ENCODE measurements at regions of chr18 and their contacts with region 1.

Region 1: DNA sequence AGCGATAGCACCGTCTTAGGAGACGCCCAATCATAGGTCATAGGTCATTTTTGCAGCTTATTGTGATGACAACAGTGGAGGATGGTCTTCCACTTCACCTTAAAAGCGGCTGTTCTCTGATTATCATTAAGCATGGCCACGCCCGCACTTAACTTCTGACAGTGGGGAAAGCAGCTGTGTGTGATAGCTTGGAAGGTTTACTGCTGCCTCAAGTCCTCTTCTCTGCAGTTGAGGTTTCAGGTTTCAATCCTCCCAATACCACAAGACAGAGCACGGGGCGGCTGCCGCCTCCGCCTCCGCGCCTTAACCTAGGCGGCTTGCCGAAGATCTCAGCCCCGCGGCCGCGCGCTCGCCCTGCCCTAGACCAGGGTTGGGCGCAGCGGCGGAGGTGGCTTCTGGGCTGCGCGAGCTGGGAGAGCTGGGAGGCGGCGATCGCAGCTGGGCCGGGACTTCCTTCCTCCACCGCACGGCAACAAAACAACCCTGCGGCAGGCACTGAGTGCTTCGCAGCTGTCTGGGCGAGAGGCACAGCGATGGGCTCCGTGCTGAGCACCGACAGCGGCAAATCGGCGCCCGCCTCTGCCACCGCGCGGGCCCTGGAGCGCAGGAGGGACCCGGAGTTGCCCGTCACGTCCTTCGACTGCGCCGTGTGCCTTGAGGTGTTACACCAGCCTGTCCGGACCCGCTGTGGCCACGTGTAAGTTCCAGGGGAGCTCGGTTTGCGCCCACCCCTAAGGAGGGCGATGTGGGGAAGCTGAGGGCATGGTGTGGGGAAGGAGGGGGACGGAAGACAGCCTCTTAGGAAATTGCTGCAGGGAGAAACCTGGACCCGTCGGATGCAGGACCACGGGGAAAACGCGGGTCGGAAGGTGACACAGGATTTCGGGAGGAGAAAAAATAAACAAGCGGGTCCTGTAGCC is at the start of gene RNF125:
- DNase-seq: peak; percentile 79 to 97 (median 92)
- ATAC-seq: peak; percentile 70 to 77
- H3K4me3 Mint-ChIP-seq: peak within 1 kb of the TSS; percentile 78 to 100 (median 94)
- H3K27ac Mint-ChIP-seq: peak within 1 kb of the TSS; percentile 88 to 100 (median 97)
- H3K4me1 Mint-ChIP-seq: peaks cover 24 to 76% (median 56%) of the 10 kb centered on the region in 4 donors
- H3K27me3 Mint-ChIP-seq: no peaks in the 10 kb centered on the region
- polyA plus RNA-seq, gene RNF125: 49.1 to 62.1 (median 60.9) TPM

Region 2: GRCh38 chr18:31942999-31943865 is 75.4 kb before region 1 on chr18 and contains the start of gene TRAPPC8:
- POLR2A ChIA-PET with region 1: interaction called, 123 read pairs
- DNase-seq: peak; percentile 81 to 97 (median 92)
- ATAC-seq: peak; percentile 88
- H3K4me3 Mint-ChIP-seq: peak within 1 kb of the TSS; percentile 93 to 100 (median 98)
- H3K27ac Mint-ChIP-seq: peak within 1 kb of the TSS; percentile 96 to 100 (median 100)
- H3K4me1 Mint-ChIP-seq: peaks cover 28 to 54% (median 46%) of the 10 kb centered on the region in 4 donors
- H3K27me3 Mint-ChIP-seq: no peaks in the 10 kb centered on the region
- polyA plus RNA-seq, gene TRAPPC8: 13.2 to 18.6 (median 14.0) TPM

Region 3: DNA sequence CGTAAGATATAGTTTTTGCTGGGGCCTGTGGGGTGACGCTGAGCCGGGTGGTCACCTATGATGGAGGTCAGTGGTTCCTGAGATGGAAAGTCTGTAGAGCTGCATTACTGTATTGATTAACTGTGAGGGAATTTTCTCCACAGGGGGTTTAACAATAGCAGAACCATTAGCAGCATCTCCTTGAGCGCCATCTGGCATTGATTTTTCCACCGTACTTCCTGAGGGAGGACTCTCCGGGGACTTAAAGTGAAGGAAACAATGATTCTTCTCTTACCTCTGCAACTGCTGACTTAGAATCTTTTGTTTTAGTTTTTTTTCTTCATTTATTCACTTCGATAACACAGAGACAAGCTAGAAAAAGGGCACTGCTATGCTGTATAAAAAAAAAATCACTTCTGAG is 22.6 kb before region 1 on chr18:
- POLR2A ChIA-PET with region 1: no interaction called
- DNase-seq: no peak
- ATAC-seq: no peak
- H3K4me3 Mint-ChIP-seq: no peak overlapping the region
- H3K27ac Mint-ChIP-seq: no peak overlapping the region
- H3K4me1 Mint-ChIP-seq: peaks cover 0 to 3% (median 1%) of the 10 kb centered on the region in 4 donors
- H3K27me3 Mint-ChIP-seq: no peaks in the 10 kb centered on the region

Region 4: DNA sequence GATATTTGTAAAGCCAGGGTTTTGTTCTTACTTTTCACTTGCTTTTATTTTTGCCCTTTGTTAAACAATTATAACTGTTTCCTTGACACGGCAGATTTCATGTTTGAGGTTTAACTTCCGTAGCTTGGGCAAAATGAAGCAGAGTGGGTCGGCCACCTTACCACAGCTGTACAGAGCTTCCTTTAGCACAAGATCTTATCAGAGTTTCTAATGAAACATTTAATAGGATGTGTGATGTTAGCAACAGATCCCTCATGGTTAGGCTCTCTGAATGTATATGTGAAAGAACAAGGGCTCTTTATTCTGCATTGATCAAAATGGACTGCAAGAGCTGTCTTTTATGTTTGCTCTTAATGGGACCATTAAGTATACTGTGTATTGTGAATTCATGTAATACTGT is 22.3 kb after region 1 on chr18:
- POLR2A ChIA-PET with region 1: interaction called, 73 read pairs
- DNase-seq: peak in 6 of 10 donors; percentile 24 to 66 (median 47)
- ATAC-seq: peak; percentile 81 to 93
- H3K4me3 Mint-ChIP-seq: peak overlapping the region; percentile 37 to 75 (median 68)
- H3K27ac Mint-ChIP-seq: peak overlapping the region; percentile 49 to 92 (median 83)
- H3K4me1 Mint-ChIP-seq: peaks cover 20 to 68% (median 57%) of the 10 kb centered on the region in 4 donors
- H3K27me3 Mint-ChIP-seq: no peaks in the 10 kb centered on the region

Region 5: DNA sequence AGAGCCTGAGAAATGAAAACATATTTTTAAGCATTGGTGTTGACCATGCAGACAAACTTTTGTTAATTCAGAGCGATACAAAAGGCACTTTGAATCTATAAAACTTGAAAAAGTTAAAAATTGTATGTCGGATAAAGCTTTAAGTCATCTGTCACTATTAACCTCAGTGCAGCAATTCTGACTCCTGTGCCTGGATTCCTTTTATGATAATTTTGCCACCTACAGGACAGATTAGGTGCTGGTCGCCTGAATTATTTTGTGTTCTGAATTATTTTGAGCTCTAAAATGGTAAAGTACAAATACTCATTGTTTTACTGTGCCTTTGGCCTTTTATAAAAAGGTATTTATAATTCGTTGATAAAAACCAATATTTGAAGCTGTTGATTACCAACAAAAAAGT is 53.7 kb after region 1 on chr18:
- POLR2A ChIA-PET with region 1: interaction called, 49 read pairs
- DNase-seq: peak in 4 of 10 donors; percentile 6 to 45 (median 28)
- ATAC-seq: peak; percentile 73 to 81
- H3K4me3 Mint-ChIP-seq: no peak overlapping the region
- H3K27ac Mint-ChIP-seq: peak overlapping the region in 6 of 10 donors; percentile 22 to 71 (median 40)
- H3K4me1 Mint-ChIP-seq: peaks cover 6 to 14% (median 12%) of the 10 kb centered on the region in 4 donors
- H3K27me3 Mint-ChIP-seq: no peaks in the 10 kb centered on the region

Region 6: DNA sequence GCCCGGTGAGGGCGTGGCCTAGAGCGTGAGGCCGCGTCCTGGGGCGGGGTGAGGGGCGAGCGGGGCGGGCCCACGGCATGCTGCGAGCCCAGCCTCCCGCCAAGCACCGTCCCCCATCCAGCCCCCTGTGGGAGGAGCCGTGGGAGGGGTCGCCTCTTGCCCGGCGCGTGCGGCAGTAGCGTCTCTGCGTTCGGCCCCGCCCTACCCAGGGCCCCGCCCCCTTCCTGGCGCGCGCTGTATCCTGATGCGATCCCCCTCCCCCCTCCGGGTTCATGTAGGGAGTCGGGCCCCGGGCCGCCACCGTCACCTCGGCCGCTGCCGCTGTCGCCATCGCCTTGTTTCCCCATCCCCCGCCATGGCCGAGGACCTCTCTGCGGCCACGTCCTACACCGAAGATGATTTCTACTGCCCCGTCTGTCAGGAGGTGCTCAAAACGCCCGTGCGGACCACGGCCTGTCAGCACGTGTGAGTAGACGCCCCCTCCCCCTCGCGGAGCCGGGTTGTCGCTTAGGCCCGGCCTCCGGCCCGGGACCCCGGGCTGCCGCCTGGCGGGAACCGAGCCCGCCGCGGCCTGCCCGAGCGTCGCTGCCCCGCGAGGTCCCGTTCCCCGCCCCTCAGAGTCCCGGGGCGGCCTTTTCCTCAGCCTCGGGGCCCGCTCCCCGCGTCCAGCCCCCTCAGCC is 74.0 kb after region 1 on chr18:
- POLR2A ChIA-PET with region 1: interaction called, 135 read pairs
- DNase-seq: peak in 9 of 10 donors; percentile 98 to 100 (median 99)
- ATAC-seq: peak; percentile 79 to 83
- H3K4me3 Mint-ChIP-seq: peak overlapping the region; percentile 97 to 99 (median 99)
- H3K27ac Mint-ChIP-seq: peak overlapping the region; percentile 88 to 99 (median 98)
- H3K4me1 Mint-ChIP-seq: peaks cover 23 to 48% (median 46%) of the 10 kb centered on the region in 4 donors
- H3K27me3 Mint-ChIP-seq: no peaks in the 10 kb centered on the region

Measured in naive thymus-derived CD8-positive, alpha-beta T cell (primary cell).